GM10248 (cell line): ENCODE measurements at regions of chr12 and their contacts with region 1.

Region 1: DNA sequence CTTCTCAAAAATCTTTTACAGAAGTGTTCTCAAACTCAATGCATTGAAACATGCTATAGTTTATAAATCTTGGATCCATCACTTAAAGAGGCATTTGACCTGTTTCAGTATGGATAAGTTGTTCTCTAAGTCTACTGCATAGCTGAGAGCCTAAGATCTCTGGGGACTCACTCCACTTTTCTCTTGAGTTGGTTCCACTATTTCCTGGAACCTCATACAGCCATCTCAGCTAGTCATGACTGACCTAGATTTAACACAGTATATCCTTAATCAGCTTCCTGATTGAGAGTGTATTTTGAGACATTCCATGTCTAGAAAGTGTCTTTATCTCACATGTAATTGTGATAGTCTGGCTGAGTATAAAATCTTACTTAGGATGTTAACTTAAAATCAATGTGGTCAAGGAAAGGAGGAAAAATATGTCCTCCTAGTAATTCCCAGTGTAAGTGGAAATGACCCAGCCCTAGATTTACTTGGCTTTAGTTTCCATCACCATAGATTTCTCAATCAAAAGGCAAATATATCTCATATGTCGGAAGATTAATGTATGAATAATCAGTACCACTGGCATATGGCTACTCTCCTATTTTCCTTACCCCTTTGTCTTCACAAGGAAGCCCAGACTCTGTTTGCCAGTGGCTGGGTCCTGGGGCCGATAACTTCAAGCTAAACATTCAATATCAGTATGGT is 61.9 kb downstream of the KICS2 start:
- DNase-seq: no peak
- CTCF ChIP-seq: no peak

Region 2: GRCh38 chr12:64147011-64147631 is 13.0 kb before region 1 on chr12:
- CTCF ChIA-PET with region 1: interaction called, 4 read pairs
- POLR2A ChIA-PET with region 1: interaction called, 11 read pairs
- DNase-seq: no peak
- CTCF ChIP-seq: no peak